ENCODE measurements at regions of chr6 and their contacts with region 1.

Region 1: GRCh38 chr6:46279874-46280273 is 109.1 kb upstream of the ENPP5 start:
- DNase-seq: no peak
- H3K4me3 ChIP-seq: no peak overlapping the region
- H3K27ac ChIP-seq: peak overlapping the region in 1 of 59 donors; percentile 18
- H3K27me3 ChIP-seq: no peaks in the 10 kb centered on the region
- CTCF ChIP-seq: no peak

Region 2: GRCh38 chr6:46080111-46080510 is 199.8 kb before region 1 on chr6:
- intact Hi-C with region 1: no loop called
- DNase-seq: no peak
- H3K4me3 ChIP-seq: no peak overlapping the region
- H3K27ac ChIP-seq: no peak overlapping the region
- H3K27me3 ChIP-seq: no peaks in the 10 kb centered on the region
- CTCF ChIP-seq: no peak

Region 3: GRCh38 chr6:46234156-46234556 is 45.7 kb before region 1 on chr6:
- intact Hi-C with region 1: no loop called
- DNase-seq: no peak
- H3K4me3 ChIP-seq: no peak overlapping the region
- H3K27ac ChIP-seq: peak overlapping the region in 41 of 59 donors; percentile 2 to 75 (median 44)
- H3K27me3 ChIP-seq: no peaks in the 10 kb centered on the region
- CTCF ChIP-seq: no peak

Region 4: GRCh38 chr6:46254331-46254730 is 25.5 kb before region 1 on chr6:
- intact Hi-C with region 1: no loop called
- DNase-seq: no peak
- H3K4me3 ChIP-seq: no peak overlapping the region
- H3K27ac ChIP-seq: no peak overlapping the region
- H3K27me3 ChIP-seq: no peaks in the 10 kb centered on the region
- CTCF ChIP-seq: no peak

Region 5: GRCh38 chr6:46293641-46294316 is 13.9 kb after region 1 on chr6:
- intact Hi-C with region 1: no loop called
- DNase-seq: no peak
- H3K4me3 ChIP-seq: no peak overlapping the region
- H3K27ac ChIP-seq: no peak overlapping the region
- H3K27me3 ChIP-seq: no peaks in the 10 kb centered on the region
- CTCF ChIP-seq: no peak

Region 6: GRCh38 chr6:46390153-46390876 is 110.4 kb after region 1 on chr6:
- intact Hi-C with region 1: loop called in 1 of 2 experiments (anchors 5 kb)
- DNase-seq: no peak
- H3K4me3 ChIP-seq: peak overlapping the region in 38 of 59 donors; percentile 1 to 56 (median 26)
- H3K27ac ChIP-seq: peak overlapping the region; percentile 1 to 95 (median 87)
- H3K27me3 ChIP-seq: no peaks in the 10 kb centered on the region
- CTCF ChIP-seq: peak in 4 of 56 donors; percentile 6 to 32 (median 13)

Region 7: DNA sequence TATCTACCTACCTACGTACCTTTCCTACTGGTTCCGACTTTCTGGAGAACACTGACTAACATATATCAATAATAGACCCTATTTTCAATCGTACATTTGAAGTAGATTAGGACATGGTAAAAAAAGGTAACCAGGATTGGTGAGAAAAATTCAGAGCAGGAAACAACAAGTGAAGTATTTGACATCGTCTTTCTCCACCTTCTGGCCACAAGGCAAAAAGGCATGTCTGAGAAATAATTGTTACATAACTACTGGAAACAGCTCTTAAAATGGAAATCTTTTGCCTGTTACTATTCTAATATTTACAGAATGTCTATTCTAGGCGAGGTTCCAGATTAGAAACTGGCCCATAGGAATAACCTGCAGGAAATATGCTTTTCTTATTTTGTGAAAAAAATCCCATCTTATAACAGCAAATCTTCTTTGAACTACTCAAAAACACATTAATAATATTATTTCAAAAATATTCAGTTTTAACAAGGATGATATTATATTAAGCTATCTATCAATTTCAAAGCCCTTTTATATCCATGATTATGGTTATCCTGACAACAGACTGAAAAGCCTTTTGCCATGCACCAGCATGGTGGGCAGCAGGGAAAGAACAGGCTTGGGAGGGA is 130.6 kb after region 1 on chr6:
- intact Hi-C with region 1: loop called in 1 of 2 experiments (anchors 5 kb)
- DNase-seq: peak in 3 of 10 donors; percentile 27 to 30 (median 28)
- H3K4me3 ChIP-seq: no peak overlapping the region
- H3K27ac ChIP-seq: peak overlapping the region in 47 of 59 donors; percentile 4 to 86 (median 61)
- H3K27me3 ChIP-seq: no peaks in the 10 kb centered on the region
- CTCF ChIP-seq: peak; percentile 53 to 99 (median 90)